Activated CD4-positive, alpha-beta memory T cell treated with anti-CD3 and anti-CD28 coated beads for 36 hours (primary cell): ENCODE measurements at regions of chr21 and their contacts with region 1.

Region 1: GRCh38 chr21:32597205-32597604 is 11.9 kb upstream of the TCP10L start:
- DNase-seq: no peak
- H3K4me3 Mint-ChIP-seq: no peak overlapping the region
- H3K27ac Mint-ChIP-seq: no peak overlapping the region
- H3K4me1 Mint-ChIP-seq: peaks cover 2% of the 10 kb centered on the region
- H3K27me3 Mint-ChIP-seq: no peaks in the 10 kb centered on the region

Region 2: DNA sequence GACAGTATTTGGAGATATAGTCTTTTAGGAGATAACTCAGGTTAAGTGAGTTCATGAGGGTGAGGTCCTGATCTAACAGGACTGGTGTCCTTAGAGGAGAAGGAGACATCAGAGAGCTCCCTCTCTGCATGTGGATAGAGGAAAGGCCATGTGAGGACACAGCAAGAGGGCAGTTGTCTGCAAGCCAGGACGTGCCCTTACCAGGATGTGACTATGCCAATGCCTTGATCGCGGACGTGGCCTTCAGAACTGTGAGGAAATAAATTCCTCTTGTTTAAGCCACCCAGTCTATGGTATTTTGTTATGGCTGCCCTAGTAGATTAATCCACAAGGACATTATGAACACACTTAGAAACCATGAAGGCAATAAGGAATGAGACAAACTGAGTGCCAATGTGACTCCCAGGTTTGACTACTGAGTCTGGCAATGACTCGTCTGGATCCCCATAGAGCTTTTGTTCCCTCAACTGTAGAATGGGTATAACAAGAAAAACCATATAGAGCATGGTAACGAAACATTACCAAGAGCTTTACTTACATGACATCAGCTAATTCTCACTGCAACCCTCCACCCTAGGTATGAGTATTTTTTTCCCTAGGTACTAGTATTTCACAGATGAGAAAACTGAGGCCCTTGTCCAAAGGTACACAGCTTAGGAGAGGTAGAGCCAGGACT is 210.9 kb before region 1 on chr21:
- CTCF ChIA-PET with region 1: interaction called, 15 read pairs
- POLR2A ChIA-PET with region 1: no interaction called
- intact Hi-C with region 1: no loop called
- DNase-seq: no peak
- H3K4me3 Mint-ChIP-seq: no peak overlapping the region
- H3K27ac Mint-ChIP-seq: no peak overlapping the region
- H3K4me1 Mint-ChIP-seq: peaks cover 46% of the 10 kb centered on the region
- H3K27me3 Mint-ChIP-seq: no peaks in the 10 kb centered on the region

Region 3: DNA sequence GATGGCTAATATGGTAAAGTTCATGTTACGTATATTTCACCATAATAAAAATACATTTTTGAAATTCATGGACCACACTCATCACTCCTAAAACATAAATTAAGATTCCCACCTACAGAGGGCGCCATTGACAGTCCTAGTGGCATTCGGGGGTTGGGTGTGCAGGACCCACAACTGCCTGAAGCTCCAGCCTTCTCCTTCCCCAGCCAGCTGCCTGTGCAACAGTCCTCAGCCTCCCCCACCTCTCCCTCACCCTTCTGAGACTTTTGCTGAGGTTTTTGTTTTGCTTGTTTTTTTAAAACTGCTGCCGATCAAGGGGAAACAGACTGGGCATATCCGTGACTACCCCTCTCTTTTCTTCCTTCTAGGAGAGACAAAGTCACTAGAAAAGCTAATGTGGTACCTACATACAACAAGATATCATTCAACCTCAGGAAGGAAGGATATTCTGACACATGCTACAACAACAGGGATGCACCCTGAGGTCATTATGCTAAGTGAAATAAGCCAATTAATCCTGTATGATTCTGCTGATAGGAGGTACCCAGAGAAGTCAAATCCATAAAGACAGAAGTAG is 193.9 kb before region 1 on chr21:
- CTCF ChIA-PET with region 1: interaction called, 110 read pairs
- POLR2A ChIA-PET with region 1: no interaction called
- intact Hi-C with region 1: loop called (anchors 1 kb)
- DNase-seq: peak; percentile 66
- H3K4me3 Mint-ChIP-seq: no peak overlapping the region
- H3K27ac Mint-ChIP-seq: no peak overlapping the region
- H3K4me1 Mint-ChIP-seq: peaks cover 6% of the 10 kb centered on the region
- H3K27me3 Mint-ChIP-seq: no peaks in the 10 kb centered on the region

Region 4: DNA sequence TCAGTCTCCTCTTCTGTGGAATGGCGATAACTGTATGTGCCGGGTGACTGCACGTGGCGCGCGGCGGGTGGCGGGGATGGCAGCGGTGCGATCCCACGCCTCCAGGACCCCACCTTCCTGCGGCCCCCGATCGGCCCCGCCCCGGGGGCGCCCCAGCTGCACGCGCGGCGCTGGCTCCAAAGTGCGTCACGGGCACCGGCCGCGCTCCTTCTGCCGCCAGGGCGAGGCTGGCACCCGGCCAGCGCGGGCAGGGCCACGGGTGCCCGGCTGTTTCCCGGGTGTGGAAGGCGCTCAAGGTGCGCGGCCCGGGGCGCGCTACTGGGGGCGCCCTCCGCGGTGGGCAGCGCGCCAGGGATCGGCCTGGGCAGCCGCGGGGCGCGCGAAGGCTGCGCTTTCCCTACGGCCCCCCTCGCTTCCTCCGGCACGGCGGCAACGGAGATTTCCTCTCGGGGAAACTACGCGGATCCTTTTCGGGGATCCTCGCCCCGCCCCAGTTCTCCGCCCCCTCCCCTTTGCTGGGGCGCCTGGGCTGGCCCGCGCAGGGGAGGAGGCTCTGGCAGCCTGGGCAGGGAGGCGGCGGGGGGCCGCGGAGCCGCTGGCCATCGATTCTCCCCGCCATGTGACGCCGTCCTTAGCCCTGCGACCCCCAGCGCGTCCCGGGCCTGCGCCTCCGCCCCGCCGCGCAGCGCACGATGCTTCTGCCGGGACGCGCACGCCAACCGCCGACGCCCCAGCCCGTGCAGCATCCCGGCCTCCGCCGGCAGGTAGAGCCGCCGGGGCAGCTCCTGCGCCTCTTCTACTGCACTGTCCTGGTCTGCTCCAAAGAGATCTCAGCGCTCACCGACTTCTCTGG is 184.8 kb before region 1 on chr21 and contains the start of gene EVA1C:
- CTCF ChIA-PET with region 1: interaction called, 16 read pairs
- POLR2A ChIA-PET with region 1: no interaction called
- intact Hi-C with region 1: no loop called
- DNase-seq: peak; percentile 76
- H3K4me3 Mint-ChIP-seq: peak within 1 kb of the TSS; percentile 91
- H3K27ac Mint-ChIP-seq: peak within 1 kb of the TSS; percentile 89
- H3K4me1 Mint-ChIP-seq: peaks cover 33% of the 10 kb centered on the region
- H3K27me3 Mint-ChIP-seq: no peaks in the 10 kb centered on the region
- total RNA-seq, gene EVA1C: 9.3 to 9.6 TPM

Region 5: GRCh38 chr21:32819694-32820093 is 222.5 kb after region 1 on chr21:
- CTCF ChIA-PET with region 1: no interaction called
- POLR2A ChIA-PET with region 1: no interaction called
- intact Hi-C with region 1: no loop called
- DNase-seq: no peak
- H3K4me3 Mint-ChIP-seq: no peak overlapping the region
- H3K27ac Mint-ChIP-seq: no peak overlapping the region
- H3K4me1 Mint-ChIP-seq: no peaks in the 10 kb centered on the region
- H3K27me3 Mint-ChIP-seq: no peaks in the 10 kb centered on the region